ENCODE measurements at regions of chrX and their contacts with region 1.

Region 1: DNA sequence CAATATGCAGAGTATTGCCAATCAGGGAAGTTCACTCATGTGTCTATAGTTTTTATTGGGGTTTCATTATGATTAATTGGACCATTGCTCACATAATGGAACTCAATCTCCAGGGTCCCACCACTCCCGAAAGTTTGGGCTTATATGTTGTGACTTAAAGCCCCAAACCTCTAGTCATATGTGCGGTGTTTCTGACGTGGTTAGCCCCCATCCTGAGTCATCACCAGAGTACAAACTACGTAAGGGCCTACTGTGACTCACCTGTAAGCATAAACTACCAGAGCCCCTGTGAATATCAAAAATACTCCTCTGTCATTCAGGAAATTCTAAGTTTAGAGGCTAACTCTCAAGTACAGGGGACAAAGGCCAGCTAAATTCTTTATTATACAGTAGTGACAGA is 5.4 kb downstream of the YIPF6 start:
- DNase-seq: no peak
- ATAC-seq: peak; percentile 77
- H3K4me3 ChIP-seq: no peak overlapping the region
- H3K27ac ChIP-seq: no peak overlapping the region
- H3K4me1 ChIP-seq: no peaks in the 10 kb centered on the region
- H3K27me3 ChIP-seq: no peaks in the 10 kb centered on the region
- CTCF ChIP-seq: no peak
- EP300 ChIP-seq: no peak
- POLR2A ChIP-seq: no peak
- RAD21 ChIP-seq: no peak

Region 2: DNA sequence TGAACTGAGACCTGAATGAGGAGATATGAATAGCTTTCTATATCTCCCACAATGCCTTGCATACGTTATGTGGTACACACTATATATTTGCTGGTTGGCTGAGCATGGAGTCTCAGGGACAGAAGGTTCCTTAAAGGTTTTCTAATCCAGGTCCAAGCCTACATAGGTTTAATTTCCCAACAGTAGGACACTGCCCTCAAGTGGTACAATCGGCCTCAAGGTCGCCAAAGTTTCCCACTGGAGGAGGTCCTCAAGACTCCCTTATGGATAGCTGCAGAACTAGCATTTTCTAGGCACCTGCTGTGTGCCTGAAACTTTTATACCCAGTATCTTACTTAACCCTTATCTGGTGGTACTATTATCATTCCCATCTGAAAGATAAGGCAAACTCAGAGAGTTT is 303.6 kb after region 1 on chrX:
- CTCF ChIA-PET with region 1: no interaction called
- POLR2A ChIA-PET with region 1: no interaction called
- RAD21 ChIA-PET with region 1: no interaction called
- SMC1A ChIA-PET with region 1: no interaction called
- in situ Hi-C with region 1: no loop called
- intact Hi-C with region 1: loop called (anchors 10 kb)
- DNase-seq: no peak
- ATAC-seq: 0 out of 3 replicates have a peak, but pooled peaks have one; percentile 28
- H3K4me3 ChIP-seq: no peak overlapping the region
- H3K27ac ChIP-seq: no peak overlapping the region
- H3K4me1 ChIP-seq: no peaks in the 10 kb centered on the region
- H3K27me3 ChIP-seq: no peaks in the 10 kb centered on the region; a peak in 1 of 4 replicates
- CTCF ChIP-seq: peak; percentile 1 to 32 (median 28); a peak in 3 of 6 replicates
- EP300 ChIP-seq: no peak
- POLR2A ChIP-seq: no peak
- RAD21 ChIP-seq: 0 out of 2 replicates have a peak, but pooled peaks have one; percentile 28